PC-9 (cell line): ENCODE measurements at regions of chr16 and their contacts with region 1.

Region 1: DNA sequence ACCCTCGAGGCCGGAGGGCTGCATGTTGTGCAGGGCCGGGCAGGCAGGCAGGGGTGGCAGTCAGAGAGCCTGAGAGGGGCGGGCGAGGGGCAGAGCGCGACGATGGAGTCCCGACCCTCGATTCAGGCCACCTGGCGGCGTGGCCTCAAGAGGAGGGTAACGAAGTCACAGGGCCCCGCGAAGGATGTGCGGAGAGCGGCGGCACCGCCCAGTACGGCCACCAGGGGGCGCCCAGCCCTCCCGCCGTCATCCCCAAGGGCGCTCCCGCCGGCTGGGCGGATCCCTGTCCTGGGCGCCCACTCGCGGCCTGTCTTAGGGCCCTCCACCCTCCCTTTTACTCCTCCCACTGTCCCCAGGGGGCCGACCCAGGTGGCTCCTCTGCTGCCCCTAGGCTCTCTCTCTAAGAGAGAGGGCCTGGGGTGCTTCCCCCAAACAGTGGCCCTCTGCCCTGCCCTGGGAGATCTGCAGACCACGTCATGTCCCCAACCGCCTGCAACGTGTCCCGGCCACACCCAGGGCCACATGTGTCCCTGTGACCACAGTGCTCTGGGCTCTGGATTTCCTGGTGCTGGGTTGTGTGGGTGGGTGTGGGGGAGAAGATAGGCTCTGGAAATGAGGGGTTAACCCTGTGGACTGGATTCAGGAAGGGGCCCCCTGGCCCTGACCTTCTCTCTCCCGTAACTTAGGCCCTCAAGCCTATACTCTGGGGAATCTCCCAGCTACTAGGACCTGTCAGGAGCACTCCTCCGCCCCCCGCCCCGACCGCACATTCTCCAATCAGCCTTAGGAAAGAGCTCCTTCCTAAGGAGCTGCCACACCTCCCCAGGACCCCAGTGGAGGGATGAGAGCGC is 5.9 kb downstream of the DPEP2 start:
- DNase-seq: peak in 1 of 2 experiments; percentile 75
- H3K4me3 ChIP-seq: no peak overlapping the region
- H3K27ac ChIP-seq: no peak overlapping the region
- H3K4me1 ChIP-seq: no peaks in the 10 kb centered on the region
- H3K27me3 ChIP-seq: no peaks in the 10 kb centered on the region
- CTCF ChIP-seq: peak; percentile 94

Region 2: GRCh38 chr16:67750466-67750865 is 242.9 kb before region 1 on chr16:
- CTCF ChIA-PET with region 1: no interaction called
- POLR2A ChIA-PET with region 1: no interaction called
- intact Hi-C with region 1: no loop called
- DNase-seq: no peak
- H3K4me3 ChIP-seq: no peak overlapping the region
- H3K27ac ChIP-seq: no peak overlapping the region
- H3K4me1 ChIP-seq: no peaks in the 10 kb centered on the region
- H3K27me3 ChIP-seq: no peaks in the 10 kb centered on the region
- CTCF ChIP-seq: no peak

Region 3: DNA sequence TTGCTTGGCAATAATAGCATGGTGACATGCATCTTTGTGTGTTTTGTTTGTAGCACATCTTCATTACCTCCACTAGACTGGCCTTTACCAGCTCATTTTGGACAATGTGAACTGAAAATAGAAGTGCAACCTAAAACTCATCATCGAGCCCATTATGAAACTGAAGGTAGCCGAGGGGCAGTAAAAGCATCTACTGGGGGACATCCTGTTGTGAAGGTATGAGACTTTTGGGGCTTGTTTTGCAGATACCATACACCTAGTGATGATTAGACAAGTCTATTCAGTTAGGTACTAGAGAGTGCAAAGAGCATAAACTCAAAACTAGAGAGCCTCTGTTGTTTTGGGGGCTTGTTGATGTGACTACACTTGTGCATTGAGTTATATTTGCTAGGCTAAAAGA is 133.0 kb after region 1 on chr16:
- CTCF ChIA-PET with region 1: interaction called, 13 read pairs
- POLR2A ChIA-PET with region 1: no interaction called
- intact Hi-C with region 1: no loop called
- DNase-seq: no peak
- H3K4me3 ChIP-seq: no peak overlapping the region
- H3K27ac ChIP-seq: no peak overlapping the region
- H3K4me1 ChIP-seq: no peaks in the 10 kb centered on the region
- H3K27me3 ChIP-seq: no peaks in the 10 kb centered on the region
- CTCF ChIP-seq: no peak